Ovary (tissue), 10 donors: ENCODE measurements at regions of chr12 and their contacts with region 1.

Region 1: DNA sequence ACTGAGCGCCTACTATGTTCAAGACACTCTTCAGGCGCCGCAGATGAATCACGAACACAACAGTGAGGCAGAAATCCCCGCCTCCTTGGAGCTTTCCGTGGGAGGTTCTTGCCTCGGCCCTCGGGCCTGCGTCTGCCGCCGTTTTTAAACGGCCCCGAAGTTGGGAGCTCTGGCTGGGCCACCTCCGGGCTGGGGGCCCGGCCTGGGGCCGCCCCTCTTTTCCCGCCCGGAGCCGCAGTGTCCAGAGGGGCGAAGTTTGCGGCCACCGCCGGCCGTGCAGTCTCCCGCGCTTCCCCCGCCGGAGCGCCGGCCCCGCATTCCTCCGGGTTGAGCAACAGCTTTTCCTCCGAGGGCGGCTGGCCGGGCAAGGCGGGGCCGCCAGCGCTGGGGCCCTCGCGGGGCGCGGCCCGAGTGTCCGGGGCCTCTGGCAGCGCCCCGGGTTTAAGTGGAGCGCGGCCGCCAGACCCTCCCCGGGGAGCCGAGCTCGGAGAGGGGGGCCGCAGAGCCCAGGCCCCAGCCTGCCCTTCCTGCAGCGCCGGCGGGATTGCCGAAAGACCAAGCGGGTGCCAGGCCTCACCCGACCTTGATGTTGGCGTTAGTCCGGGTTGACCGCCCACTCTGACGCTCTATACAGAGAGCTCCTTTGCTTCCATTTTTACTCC is 18.7 kb upstream of the CTDSP2 start:
- DNase-seq: peak; percentile 83 to 91 (median 86)
- H3K4me3 ChIP-seq: peak overlapping the region; percentile 68
- H3K27ac ChIP-seq: peak overlapping the region; percentile 87 to 97
- H3K4me1 ChIP-seq: peaks cover 5% of the 10 kb centered on the region
- H3K27me3 ChIP-seq: no peaks in the 10 kb centered on the region
- CTCF ChIP-seq: peak in 1 of 3 donors; percentile 18
- EP300 ChIP-seq: no peak
- POLR2A ChIP-seq: peak; percentile 78

Region 2: GRCh38 chr12:57846577-57847319 is 18.5 kb before region 1 on chr12 and contains the start of gene CTDSP2:
- intact Hi-C with region 1: loop called in 1 of 4 experiments (anchors 2 kb)
- DNase-seq: peak; percentile 99 to 100 (median 100)
- H3K4me3 ChIP-seq: peak within 1 kb of the TSS; percentile 85
- H3K27ac ChIP-seq: peak within 1 kb of the TSS; percentile 98 to 99
- H3K4me1 ChIP-seq: peaks cover 5% of the 10 kb centered on the region
- H3K27me3 ChIP-seq: no peaks in the 10 kb centered on the region
- CTCF ChIP-seq: no peak
- EP300 ChIP-seq: no peak
- POLR2A ChIP-seq: peak; percentile 73
- total RNA-seq, gene CTDSP2: 73.1 to 212 (median 189) TPM

Region 3: GRCh38 chr12:57888409-57889157 is 23.4 kb after region 1 on chr12:
- intact Hi-C with region 1: loop called in 1 of 4 experiments (anchors 2 kb)
- DNase-seq: peak; percentile 41 to 67 (median 58)
- H3K4me3 ChIP-seq: no peak overlapping the region
- H3K27ac ChIP-seq: peak overlapping the region; percentile 86 to 100
- H3K4me1 ChIP-seq: peaks cover 44% of the 10 kb centered on the region
- H3K27me3 ChIP-seq: no peaks in the 10 kb centered on the region
- CTCF ChIP-seq: no peak
- EP300 ChIP-seq: no peak
- POLR2A ChIP-seq: no peak

Region 4: GRCh38 chr12:58007875-58008274 is 142.7 kb after region 1 on chr12:
- intact Hi-C with region 1: no loop called
- DNase-seq: no peak
- H3K4me3 ChIP-seq: no peak overlapping the region
- H3K27ac ChIP-seq: no peak overlapping the region
- H3K4me1 ChIP-seq: no peaks in the 10 kb centered on the region
- H3K27me3 ChIP-seq: no peaks in the 10 kb centered on the region
- CTCF ChIP-seq: no peak
- EP300 ChIP-seq: no peak
- POLR2A ChIP-seq: no peak